AG04449 (cell line): ENCODE measurements at regions of chr12 and their contacts with region 1.

Region 1: GRCh38 chr12:12266873-12267741 is at the start of gene LRP6:
- DNase-seq: peak; percentile 75
- H3K4me3 ChIP-seq: peak within 1 kb of the TSS; percentile 99
- CTCF ChIP-seq: no peak

Region 2: DNA sequence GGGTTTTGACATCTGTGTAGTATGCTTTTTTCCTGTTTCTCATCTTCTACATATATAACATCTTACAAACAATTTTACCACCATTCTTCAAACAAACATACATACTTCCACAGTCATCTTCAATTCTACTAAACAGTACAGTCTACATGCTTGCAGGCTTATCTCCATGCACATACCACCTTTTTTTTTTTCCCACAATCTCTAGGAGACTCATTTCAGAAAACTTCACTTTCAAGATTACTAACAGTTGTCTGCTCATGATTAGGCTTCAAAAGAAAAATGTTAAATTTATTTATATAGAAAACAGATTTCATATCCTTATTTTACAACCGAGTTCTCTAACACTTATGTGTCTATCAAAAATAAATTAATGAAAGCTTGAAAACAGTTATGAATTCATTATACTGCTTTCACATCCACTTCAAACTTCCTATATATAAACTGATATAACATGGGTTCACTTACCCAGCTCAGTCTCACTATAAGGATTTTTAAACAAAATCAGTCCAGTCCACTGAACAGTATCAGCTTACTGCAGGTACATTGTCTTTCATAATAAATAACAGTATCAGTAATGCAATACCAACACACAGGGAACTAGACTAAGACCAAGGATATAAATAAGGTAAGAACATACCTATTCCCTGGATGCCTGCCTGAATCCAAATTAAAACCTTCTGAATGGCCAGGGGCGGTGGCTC is 42.7 kb before region 1 on chr12:
- CTCF ChIA-PET with region 1: interaction called, 3 read pairs
- POLR2A ChIA-PET with region 1: interaction called, 11 read pairs
- DNase-seq: peak; percentile 36
- H3K4me3 ChIP-seq: no peak overlapping the region
- CTCF ChIP-seq: no peak

Region 3: DNA sequence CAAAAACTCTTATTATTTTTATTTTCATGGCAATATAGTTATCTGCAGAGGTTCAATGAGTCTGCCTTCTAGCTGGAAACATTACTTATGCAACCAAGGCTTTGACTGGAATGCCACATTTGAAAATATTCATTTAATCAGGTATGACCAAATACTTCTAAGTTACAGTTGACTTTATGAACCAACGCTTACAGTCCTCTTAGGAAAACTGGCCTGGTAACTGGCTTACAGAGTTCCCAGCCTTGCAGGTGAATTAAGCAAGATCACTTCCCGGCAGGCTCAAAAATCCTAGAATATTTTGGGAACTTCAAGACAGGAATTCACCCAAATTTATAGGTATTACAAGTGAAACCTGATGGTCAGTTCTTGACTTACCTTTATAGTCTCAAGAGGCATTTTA is 12.6 kb before region 1 on chr12:
- CTCF ChIA-PET with region 1: interaction called, 4 read pairs
- POLR2A ChIA-PET with region 1: interaction called, 18 read pairs
- DNase-seq: no peak
- H3K4me3 ChIP-seq: no peak overlapping the region
- CTCF ChIP-seq: no peak

Region 4: GRCh38 chr12:12791756-12792369 is 524.8 kb after region 1 on chr12:
- CTCF ChIA-PET with region 1: no interaction called
- POLR2A ChIA-PET with region 1: no interaction called
- DNase-seq: no peak
- H3K4me3 ChIP-seq: no peak overlapping the region
- CTCF ChIP-seq: no peak